Adrenal gland (tissue), 19 donors: ENCODE measurements at regions of chr2 and their contacts with region 1.

Region 1: DNA sequence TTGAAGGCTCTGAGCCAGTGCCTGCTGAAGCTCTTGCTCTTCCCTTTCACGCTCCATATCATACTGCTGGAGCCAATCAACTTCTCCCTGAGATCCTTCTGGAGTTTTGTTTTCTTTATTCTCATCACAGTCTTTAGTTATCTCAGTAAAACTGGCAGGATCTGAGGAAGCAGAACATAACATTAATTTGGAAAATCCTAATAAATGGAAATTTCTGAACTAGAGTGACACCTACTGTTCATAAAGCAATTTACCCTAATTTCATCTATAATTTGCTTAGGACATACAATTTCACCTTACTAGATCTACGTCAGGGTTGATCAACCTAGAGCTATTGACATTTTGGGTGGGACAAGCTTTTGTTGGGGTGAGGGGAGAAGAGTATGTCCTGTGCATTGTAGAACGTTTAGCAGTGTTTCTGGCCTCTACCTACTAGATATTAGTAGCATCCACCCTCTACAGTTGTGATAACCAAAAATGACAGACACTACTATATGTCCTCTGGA is 47.1 kb downstream of the VIL1 start:
- DNase-seq: no peak
- H3K4me3 ChIP-seq: no peak overlapping the region
- H3K27ac ChIP-seq: no peak overlapping the region
- H3K4me1 ChIP-seq: peaks cover 7% of the 10 kb centered on the region in 2 donors
- H3K27me3 ChIP-seq: no peaks in the 10 kb centered on the region
- CTCF ChIP-seq: peak; percentile 23 to 65 (median 47)
- POLR2A ChIP-seq: no peak

Region 2: DNA sequence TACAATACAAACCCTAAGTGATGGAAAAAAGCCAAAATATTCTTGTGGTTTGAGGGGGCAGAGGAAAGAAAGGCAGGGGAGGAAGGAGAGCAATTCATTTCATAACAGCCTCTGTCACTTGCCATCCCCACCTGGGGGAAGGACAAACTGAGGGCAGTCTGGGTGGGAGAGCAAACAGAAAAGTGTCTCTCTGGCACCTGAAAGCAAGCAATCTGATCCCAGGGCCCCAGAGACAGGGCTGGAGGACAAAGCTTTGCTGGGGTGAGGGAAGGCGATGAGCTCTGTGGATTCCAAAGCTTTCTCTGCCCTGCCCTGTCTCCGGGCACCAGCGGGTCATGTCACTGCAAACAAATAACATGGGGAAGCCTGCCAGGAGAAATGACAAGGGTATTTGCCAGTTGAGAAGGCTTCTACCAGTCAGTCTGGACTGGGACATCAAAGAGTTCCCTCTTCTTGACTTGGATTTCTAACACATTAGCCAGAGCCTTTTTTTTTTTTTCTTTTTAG is 1078.1 kb before region 1 on chr2:
- intact Hi-C with region 1: no loop called
- DNase-seq: peak in 4 of 7 donors; percentile 23 to 70 (median 49)
- H3K4me3 ChIP-seq: no peak overlapping the region
- H3K27ac ChIP-seq: no peak overlapping the region
- H3K4me1 ChIP-seq: peaks cover 8 to 14% of the 10 kb centered on the region in 2 donors
- H3K27me3 ChIP-seq: no peaks in the 10 kb centered on the region
- CTCF ChIP-seq: no peak
- POLR2A ChIP-seq: no peak

Region 3: GRCh38 chr2:218399391-218400166 is 66.5 kb before region 1 on chr2 and contains the start of gene CTDSP1:
- intact Hi-C with region 1: loop called in 1 of 2 experiments (anchors 5 kb)
- DNase-seq: peak; percentile 96 to 98 (median 97)
- H3K4me3 ChIP-seq: peak within 1 kb of the TSS; percentile 78 to 96 (median 95)
- H3K27ac ChIP-seq: peak within 1 kb of the TSS; percentile 94 to 100 (median 98)
- H3K4me1 ChIP-seq: peaks cover 24 to 47% of the 10 kb centered on the region in 2 donors
- H3K27me3 ChIP-seq: no peaks in the 10 kb centered on the region
- CTCF ChIP-seq: peak in 2 of 6 experiments; percentile 21 to 24
- POLR2A ChIP-seq: peak in 1 of 2 donors; percentile 71
- total RNA-seq, gene CTDSP1: 53.1 to 161 (median 118) TPM